WTC11 (cell line): ENCODE measurements at regions of chr16 and their contacts with region 1.

Region 1: DNA sequence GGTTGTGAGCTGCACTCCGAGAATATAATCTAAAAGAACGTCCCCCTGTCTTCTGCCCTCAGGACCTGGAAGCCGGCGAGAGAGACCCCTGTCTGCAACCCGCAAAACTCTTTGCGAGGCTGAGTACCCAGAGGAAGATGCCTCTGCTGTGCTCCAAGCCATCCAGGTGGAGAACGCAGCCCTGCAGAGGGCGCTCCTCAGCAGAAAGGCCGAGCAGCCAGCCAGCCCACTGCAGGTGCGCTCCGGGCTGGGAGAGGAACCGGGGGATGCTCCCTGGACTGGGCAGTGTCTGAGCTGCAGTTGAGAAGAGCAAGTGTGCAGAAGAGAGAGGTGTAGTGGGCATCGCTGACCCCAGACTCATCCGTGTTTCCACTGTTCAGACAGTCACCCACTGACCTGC is 148.3 kb downstream of the KATNIP start:
- DNase-seq: peak; percentile 94
- ATAC-seq: peak; percentile 94
- H3K4me3 Mint-ChIP-seq: no peak overlapping the region
- H3K27ac Mint-ChIP-seq: no peak overlapping the region
- H3K4me1 Mint-ChIP-seq: peaks cover 21% of the 10 kb centered on the region
- H3K27me3 Mint-ChIP-seq: no peaks in the 10 kb centered on the region
- CTCF ChIP-seq: peak; percentile 61

Region 2: DNA sequence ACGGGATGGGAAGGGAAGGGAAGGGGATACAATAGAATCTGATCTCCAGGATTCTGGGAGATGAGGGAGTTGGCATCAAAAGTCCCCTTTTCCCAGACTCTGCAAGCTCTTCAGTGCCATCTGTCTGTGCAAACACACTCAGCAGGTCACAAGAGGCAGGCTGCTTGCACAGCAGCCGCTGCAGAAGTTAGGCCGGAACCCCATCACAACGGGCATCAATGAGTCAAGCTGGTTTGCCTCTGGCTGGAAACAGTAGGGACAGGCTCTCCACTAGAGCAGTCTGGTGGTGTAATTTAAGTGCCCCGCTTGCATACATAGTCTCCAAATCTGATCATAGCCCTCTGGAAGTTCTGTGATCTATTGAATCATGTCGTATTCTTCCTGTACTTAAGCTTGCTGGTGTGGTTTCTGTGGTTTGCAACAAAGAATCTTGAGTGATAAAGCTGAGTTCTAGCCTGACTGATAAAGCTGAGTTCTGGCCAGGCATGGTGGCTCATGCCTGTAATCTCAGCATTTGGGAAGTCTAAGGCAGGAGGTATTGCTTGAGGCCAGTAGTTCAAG is 528.7 kb before region 1 on chr16:
- CTCF ChIA-PET with region 1: no interaction called
- POLR2A ChIA-PET with region 1: no interaction called
- DNase-seq: no peak
- ATAC-seq: peak; percentile 69
- H3K4me3 Mint-ChIP-seq: no peak overlapping the region
- H3K27ac Mint-ChIP-seq: no peak overlapping the region
- H3K4me1 Mint-ChIP-seq: no peaks in the 10 kb centered on the region
- H3K27me3 Mint-ChIP-seq: peaks cover 10% of the 10 kb centered on the region
- CTCF ChIP-seq: no peak

Region 3: GRCh38 chr16:27721531-27722181 is 23.4 kb after region 1 on chr16:
- CTCF ChIA-PET with region 1: interaction called, 25 read pairs
- POLR2A ChIA-PET with region 1: no interaction called
- DNase-seq: no peak
- ATAC-seq: no peak; the same call in 1 of the 2 replicates
- H3K4me3 Mint-ChIP-seq: no peak overlapping the region
- H3K27ac Mint-ChIP-seq: no peak overlapping the region
- H3K4me1 Mint-ChIP-seq: peaks cover 23% of the 10 kb centered on the region
- H3K27me3 Mint-ChIP-seq: no peaks in the 10 kb centered on the region
- CTCF ChIP-seq: no peak

Region 4: DNA sequence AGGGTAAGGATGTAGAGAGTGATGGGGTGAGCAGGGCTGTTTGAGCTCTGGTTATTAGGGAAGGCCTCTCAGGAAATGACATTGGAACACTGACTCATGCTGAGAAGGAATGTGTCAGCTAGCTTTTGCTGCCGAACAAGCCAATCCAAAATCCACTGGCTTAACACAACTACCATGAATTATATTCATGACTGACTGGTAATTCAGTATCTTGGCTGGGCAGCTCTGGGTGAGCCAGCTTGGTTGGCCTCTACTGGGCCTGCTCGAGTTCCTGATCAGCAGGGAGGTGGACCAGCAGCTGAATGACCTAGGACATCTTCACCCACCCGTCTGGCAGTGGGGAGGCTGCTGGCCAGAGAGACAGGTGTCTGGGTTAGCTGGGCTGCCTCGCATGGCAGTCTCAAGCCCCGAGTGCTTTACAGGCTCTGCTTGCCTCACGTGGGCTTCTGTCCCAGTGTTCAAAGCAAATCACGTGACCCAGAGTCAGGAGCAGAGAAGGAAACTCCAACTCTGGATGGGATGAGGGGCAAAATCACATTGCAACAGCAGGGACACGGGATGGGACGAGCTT is 61.1 kb after region 1 on chr16:
- CTCF ChIA-PET with region 1: interaction called, 14 read pairs
- POLR2A ChIA-PET with region 1: no interaction called
- DNase-seq: no peak
- ATAC-seq: no peak
- H3K4me3 Mint-ChIP-seq: no peak overlapping the region
- H3K27ac Mint-ChIP-seq: no peak overlapping the region
- H3K4me1 Mint-ChIP-seq: peaks cover 14% of the 10 kb centered on the region
- H3K27me3 Mint-ChIP-seq: no peaks in the 10 kb centered on the region
- CTCF ChIP-seq: no peak

Region 5: DNA sequence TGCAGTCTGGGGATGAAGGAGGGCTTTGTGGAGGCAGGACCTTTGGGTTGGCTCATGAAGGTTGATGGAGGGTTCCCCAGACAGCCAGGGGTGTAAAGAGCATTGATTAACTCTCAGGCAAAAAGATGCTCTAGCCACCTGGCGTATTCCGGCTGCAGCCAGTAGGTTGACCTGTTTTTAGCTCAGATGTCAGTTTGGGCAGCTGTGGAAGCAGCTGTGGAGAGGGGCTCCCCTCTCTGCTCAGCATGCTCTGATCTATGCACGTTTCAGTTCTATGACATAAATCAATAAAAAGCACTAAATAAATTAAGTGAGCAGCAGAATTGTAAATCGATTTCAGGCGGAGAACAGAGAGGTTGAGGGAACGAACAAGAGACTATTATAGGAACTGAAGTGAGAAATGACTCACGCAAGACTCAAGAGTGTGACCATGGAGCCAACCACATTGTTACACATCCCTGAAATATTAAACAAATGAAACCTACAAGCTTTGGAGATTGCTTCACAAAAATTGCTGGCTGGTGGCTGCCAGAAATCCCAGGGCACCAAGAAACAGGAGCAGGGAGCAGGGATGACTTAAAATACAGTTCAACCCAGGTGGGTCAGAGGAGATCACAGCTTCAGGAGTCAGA is 253.3 kb after region 1 on chr16:
- CTCF ChIA-PET with region 1: no interaction called
- POLR2A ChIA-PET with region 1: no interaction called
- DNase-seq: no peak
- ATAC-seq: no peak
- H3K4me3 Mint-ChIP-seq: no peak overlapping the region
- H3K27ac Mint-ChIP-seq: no peak overlapping the region
- H3K4me1 Mint-ChIP-seq: no peaks in the 10 kb centered on the region
- H3K27me3 Mint-ChIP-seq: peaks cover 9% of the 10 kb centered on the region; the same call in 1 of the 2 replicates
- CTCF ChIP-seq: no peak